ENCODE measurements at regions of chr10 and their contacts with region 1.

Region 1: GRCh38 chr10:91409869-91410637 is at the start of gene HECTD2:
- DNase-seq: peak; percentile 77
- H3K4me3 Mint-ChIP-seq: peak within 1 kb of the TSS; percentile 83
- H3K27ac Mint-ChIP-seq: peak within 1 kb of the TSS; percentile 88
- H3K4me1 Mint-ChIP-seq: peaks cover 15% of the 10 kb centered on the region
- H3K27me3 Mint-ChIP-seq: peaks cover 12% of the 10 kb centered on the region
- total RNA-seq, gene HECTD2: 2.3 to 3.1 TPM

Region 2: DNA sequence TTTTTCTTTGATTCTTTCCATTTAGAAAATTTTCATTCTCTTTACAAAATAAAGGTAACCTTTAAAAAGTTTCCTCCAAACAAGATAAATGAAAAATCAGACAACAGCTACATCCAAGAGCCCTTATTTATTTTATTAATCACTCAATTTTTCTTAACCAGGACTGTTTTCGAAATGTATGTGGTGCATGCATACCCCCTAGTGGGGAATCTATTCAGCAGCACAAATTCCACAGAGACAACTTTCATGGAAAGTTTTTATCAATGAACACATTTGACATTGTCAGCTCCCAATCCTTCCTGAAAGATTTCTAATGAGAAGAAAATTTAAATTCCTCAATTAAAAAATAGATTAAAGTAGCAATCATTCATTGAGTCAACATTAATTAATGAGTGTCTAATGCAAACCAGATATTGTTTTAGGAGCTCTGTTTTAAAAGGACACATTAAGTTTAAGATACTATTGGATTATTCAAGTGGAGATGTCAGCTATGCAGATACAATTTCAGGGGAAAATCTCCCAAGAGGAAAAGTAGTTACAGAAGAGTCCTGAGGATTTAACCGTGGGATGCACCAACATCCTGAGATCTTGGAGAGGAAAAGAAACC is 547.0 kb before region 1 on chr10:
- CTCF ChIA-PET with region 1: no interaction called
- intact Hi-C with region 1: no loop called
- DNase-seq: peak; percentile 10
- H3K4me3 Mint-ChIP-seq: no peak overlapping the region
- H3K27ac Mint-ChIP-seq: no peak overlapping the region
- H3K4me1 Mint-ChIP-seq: peaks cover 4% of the 10 kb centered on the region
- H3K27me3 Mint-ChIP-seq: peaks cover 28% of the 10 kb centered on the region

Region 3: GRCh38 chr10:91220194-91220953 is 189.7 kb before region 1 on chr10 and contains the start of gene PCGF5:
- CTCF ChIA-PET with region 1: no interaction called
- intact Hi-C with region 1: loop called (anchors 2 kb)
- DNase-seq: peak; percentile 89
- H3K4me3 Mint-ChIP-seq: peak within 1 kb of the TSS; percentile 80
- H3K27ac Mint-ChIP-seq: peak within 1 kb of the TSS; percentile 22
- H3K4me1 Mint-ChIP-seq: peaks cover 33% of the 10 kb centered on the region
- H3K27me3 Mint-ChIP-seq: no peaks in the 10 kb centered on the region
- total RNA-seq, gene PCGF5: 34.2 to 36.4 TPM

Region 4: GRCh38 chr10:91313796-91314485 is 96.1 kb before region 1 on chr10:
- CTCF ChIA-PET with region 1: interaction called, 3 read pairs
- intact Hi-C with region 1: loop called (anchors 5 kb)
- DNase-seq: peak; percentile 50
- H3K4me3 Mint-ChIP-seq: no peak overlapping the region
- H3K27ac Mint-ChIP-seq: peak overlapping the region; percentile 82
- H3K4me1 Mint-ChIP-seq: peaks cover 11% of the 10 kb centered on the region
- H3K27me3 Mint-ChIP-seq: peaks cover 4% of the 10 kb centered on the region

Region 5: GRCh38 chr10:91389636-91390512 is 20.2 kb before region 1 on chr10:
- CTCF ChIA-PET with region 1: interaction called, 10 read pairs
- intact Hi-C with region 1: loop called (anchors 1 kb)
- DNase-seq: no peak
- H3K4me3 Mint-ChIP-seq: no peak overlapping the region
- H3K27ac Mint-ChIP-seq: no peak overlapping the region
- H3K4me1 Mint-ChIP-seq: peaks cover 4% of the 10 kb centered on the region
- H3K27me3 Mint-ChIP-seq: peaks cover 12% of the 10 kb centered on the region

Region 6: GRCh38 chr10:91694170-91694794 is 284.2 kb after region 1 on chr10:
- CTCF ChIA-PET with region 1: no interaction called
- intact Hi-C with region 1: loop called (anchors 5 kb)
- DNase-seq: peak; percentile 37
- H3K4me3 Mint-ChIP-seq: no peak overlapping the region
- H3K27ac Mint-ChIP-seq: no peak overlapping the region
- H3K4me1 Mint-ChIP-seq: peaks cover 4% of the 10 kb centered on the region
- H3K27me3 Mint-ChIP-seq: peaks cover 5% of the 10 kb centered on the region